Colonic mucosa (tissue), 4 donors: ENCODE measurements at regions of chr14 and their contacts with region 1.

Region 1: GRCh38 chr14:64986578-64987571 is at the start of gene FNTB:
- DNase-seq: peak; percentile 97
- H3K4me3 ChIP-seq: peak within 1 kb of the TSS; percentile 79
- H3K27ac ChIP-seq: peak within 1 kb of the TSS; percentile 78
- H3K4me1 ChIP-seq: peaks cover 9% of the 10 kb centered on the region
- H3K27me3 ChIP-seq: no peaks in the 10 kb centered on the region
- CTCF ChIP-seq: peak; percentile 77
- total RNA-seq, gene FNTB: 12.1 to 20.7 TPM

Region 2: DNA sequence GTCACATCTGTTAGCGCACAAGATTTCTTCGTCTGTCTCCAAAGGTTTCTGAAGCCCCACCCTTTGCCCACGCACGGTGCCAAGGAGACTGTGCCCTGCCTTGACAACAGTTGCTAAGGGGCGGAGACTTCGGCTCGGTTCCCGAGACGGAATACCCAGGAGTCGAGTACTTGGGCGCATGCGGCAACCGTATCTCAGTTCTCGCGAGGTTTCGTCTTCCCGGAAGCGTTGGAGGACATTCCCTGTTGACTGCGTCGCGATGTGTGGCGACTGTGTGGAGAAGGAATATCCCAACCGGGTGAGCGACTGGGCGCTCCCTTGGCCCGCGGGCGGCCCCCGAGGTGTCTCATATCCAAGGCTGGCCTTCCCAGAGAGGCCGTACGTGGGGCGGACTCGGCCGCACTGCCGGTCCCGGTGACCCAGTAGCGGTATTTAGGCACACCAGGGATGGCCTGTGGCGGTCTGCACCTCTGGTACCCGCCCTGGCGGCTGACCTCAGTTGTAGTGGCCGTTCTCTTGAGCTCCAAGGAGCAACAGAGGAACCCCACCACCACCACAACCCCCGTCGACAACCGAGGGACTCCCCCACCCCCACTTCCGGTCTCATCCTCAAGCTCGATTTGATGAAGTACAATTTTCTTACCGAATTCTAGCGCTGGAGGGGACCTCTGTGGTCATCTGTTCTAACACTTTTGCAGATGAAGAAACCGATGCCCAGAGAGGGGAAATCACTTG is 72.5 kb before region 1 on chr14 and contains the start of gene CHURC1:
- intact Hi-C with region 1: loop called (anchors 10 kb)
- DNase-seq: peak; percentile 100
- H3K4me3 ChIP-seq: peak within 1 kb of the TSS; percentile 89
- H3K27ac ChIP-seq: peak within 1 kb of the TSS; percentile 96
- H3K4me1 ChIP-seq: peaks cover 6% of the 10 kb centered on the region
- H3K27me3 ChIP-seq: no peaks in the 10 kb centered on the region
- CTCF ChIP-seq: no peak
- total RNA-seq, gene CHURC1: 46.5 to 57.7 TPM